Prostate gland (tissue), 2 donors: ENCODE measurements at regions of chr9 and their contacts with region 1.

Region 1: DNA sequence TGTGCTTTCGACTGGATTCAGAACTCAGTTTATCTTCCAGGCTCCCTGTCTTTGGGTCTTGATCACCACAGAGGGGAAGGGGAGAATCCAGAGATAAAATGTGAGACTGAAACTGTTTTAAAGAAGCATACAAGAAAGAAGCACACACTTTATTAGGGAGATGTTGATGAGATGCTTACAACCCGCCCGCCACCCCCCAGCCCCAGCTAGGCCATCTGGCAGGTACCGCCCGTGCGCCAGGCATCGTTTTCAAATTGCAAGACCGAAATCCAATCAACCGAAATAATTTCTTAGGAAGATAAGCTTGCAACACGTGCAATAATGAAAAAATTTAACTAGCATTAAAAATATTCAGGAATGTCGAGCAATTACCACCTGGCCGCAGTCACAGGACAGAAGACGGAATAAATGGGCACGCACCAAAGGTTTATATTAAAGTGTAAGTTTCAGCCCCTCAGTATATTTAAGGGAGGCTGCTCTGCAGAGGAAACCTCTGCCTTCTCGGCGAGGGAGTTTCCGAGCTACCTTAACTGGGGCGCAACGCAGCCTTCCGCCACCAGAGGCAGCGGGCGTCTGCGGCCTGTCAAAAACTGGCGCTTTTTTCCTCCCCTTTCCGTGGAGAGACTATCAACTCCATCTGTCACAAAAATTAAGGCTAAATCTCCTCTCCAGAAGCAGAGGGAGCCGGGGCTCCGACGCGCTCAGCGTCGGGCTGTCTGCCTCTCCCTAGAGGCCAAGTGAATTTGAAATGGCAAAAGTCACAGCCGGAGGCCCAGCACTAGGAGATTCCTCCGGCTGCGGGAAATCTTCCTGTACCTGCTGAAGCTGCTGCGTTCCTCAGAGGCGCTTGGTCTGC is 996 bp upstream of the GAS1 start:
- DNase-seq: peak; percentile 77
- H3K4me3 ChIP-seq: peak overlapping the region; percentile 71 to 80
- H3K27ac ChIP-seq: peak overlapping the region; percentile 76 to 95
- H3K4me1 ChIP-seq: peaks cover 5% of the 10 kb centered on the region
- H3K27me3 ChIP-seq: no peaks in the 10 kb centered on the region
- CTCF ChIP-seq: peak; percentile 68 to 86 (median 80)
- POLR2A ChIP-seq: no peak

Region 2: DNA sequence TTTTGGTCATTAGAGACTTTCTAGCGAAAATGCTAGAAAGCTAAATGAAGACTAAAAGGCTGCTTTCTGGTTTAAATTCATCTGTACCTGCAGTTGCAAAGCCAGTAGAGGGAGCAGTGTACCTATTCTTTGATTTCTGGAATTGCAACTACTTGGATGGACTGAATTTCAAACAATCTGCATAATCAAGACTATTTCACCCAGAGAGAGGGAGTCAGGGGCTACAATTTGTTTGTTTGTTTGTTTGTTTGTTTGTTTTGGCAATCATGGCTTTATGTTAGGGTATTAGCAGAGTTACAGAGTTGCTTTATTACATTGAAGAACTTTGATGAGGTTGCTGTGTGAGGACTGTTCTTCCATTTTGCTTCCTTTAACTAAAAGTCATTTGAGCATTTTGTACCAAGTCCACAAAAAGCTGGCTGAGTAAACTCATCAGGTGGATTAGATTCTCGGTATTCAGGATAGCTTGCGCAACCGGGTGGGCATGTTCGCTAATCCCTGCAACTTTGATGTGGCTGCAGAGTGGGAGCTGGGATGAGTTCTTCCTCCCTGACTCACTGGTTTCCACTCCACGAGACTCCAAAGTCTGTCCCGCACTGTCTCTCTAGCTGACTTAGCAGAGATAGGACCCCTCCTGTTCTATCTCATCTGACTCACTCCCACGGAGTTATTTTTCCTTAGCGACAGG is 514.1 kb before region 1 on chr9:
- intact Hi-C with region 1: loop called (anchors 10 kb)
- DNase-seq: peak; percentile 13
- H3K4me3 ChIP-seq: no peak overlapping the region
- H3K27ac ChIP-seq: peak overlapping the region in 1 of 2 donors; percentile 33
- H3K4me1 ChIP-seq: no peaks in the 10 kb centered on the region
- H3K27me3 ChIP-seq: no peaks in the 10 kb centered on the region
- CTCF ChIP-seq: peak in 3 of 4 experiments; percentile 60 to 74 (median 72)
- POLR2A ChIP-seq: no peak

Region 3: GRCh38 chr9:86637515-86637914 is 310.8 kb before region 1 on chr9:
- intact Hi-C with region 1: loop called (anchors 10 kb)
- DNase-seq: peak; percentile 13
- H3K4me3 ChIP-seq: no peak overlapping the region
- H3K27ac ChIP-seq: no peak overlapping the region
- H3K4me1 ChIP-seq: no peaks in the 10 kb centered on the region
- H3K27me3 ChIP-seq: no peaks in the 10 kb centered on the region
- CTCF ChIP-seq: peak in 3 of 4 experiments; percentile 44 to 48 (median 48)
- POLR2A ChIP-seq: no peak

Region 4: GRCh38 chr9:86968258-86968920 is 20.1 kb after region 1 on chr9:
- intact Hi-C with region 1: no loop called
- DNase-seq: no peak
- H3K4me3 ChIP-seq: no peak overlapping the region
- H3K27ac ChIP-seq: no peak overlapping the region
- H3K4me1 ChIP-seq: peaks cover 6% of the 10 kb centered on the region
- H3K27me3 ChIP-seq: no peaks in the 10 kb centered on the region
- CTCF ChIP-seq: no peak
- POLR2A ChIP-seq: no peak

Region 5: GRCh38 chr9:87039809-87040392 is 91.6 kb after region 1 on chr9:
- intact Hi-C with region 1: loop called (anchors 5 kb)
- DNase-seq: no peak
- H3K4me3 ChIP-seq: no peak overlapping the region
- H3K27ac ChIP-seq: no peak overlapping the region
- H3K4me1 ChIP-seq: no peaks in the 10 kb centered on the region
- H3K27me3 ChIP-seq: no peaks in the 10 kb centered on the region
- CTCF ChIP-seq: no peak
- POLR2A ChIP-seq: no peak

Region 6: DNA sequence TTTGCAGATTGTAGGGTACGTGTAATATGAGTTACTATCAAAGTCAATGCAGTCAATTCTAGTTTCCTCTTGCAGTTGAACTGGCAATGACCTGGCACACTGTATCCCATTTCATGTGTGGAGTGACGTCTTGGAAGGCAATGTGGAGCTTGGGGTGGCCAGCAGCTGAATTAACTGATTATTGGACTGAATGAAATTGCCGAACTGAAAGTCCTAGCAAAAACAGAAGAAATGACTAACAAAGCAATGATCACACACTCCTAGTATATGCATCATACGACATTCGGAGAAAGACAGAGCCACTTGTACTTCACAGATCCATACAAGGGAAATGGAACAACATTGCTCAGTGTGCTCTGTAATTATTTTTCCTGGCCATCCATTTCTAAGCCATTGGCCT is 290.2 kb after region 1 on chr9:
- intact Hi-C with region 1: loop called (anchors 10 kb)
- DNase-seq: no peak
- H3K4me3 ChIP-seq: no peak overlapping the region
- H3K27ac ChIP-seq: no peak overlapping the region
- H3K4me1 ChIP-seq: no peaks in the 10 kb centered on the region
- H3K27me3 ChIP-seq: no peaks in the 10 kb centered on the region
- CTCF ChIP-seq: no peak
- POLR2A ChIP-seq: no peak